Caco-2 (cell line): ENCODE measurements at regions of chr2 and their contacts with region 1.

Region 1: GRCh38 chr2:37877457-37878315 is 47.4 kb upstream of the RMDN2 start:
- DNase-seq: peak in 1 of 2 experiments; percentile 74
- H3K4me3 ChIP-seq: no peak overlapping the region
- H3K4me3 Mint-ChIP-seq: no peak overlapping the region
- H3K27ac Mint-ChIP-seq: no peak overlapping the region
- H3K4me1 ChIP-seq: no peaks in the 10 kb centered on the region; the same call in 1 of the 2 replicates
- H3K4me1 Mint-ChIP-seq: peaks cover 9% of the 10 kb centered on the region
- H3K27me3 ChIP-seq: no peaks in the 10 kb centered on the region
- H3K27me3 Mint-ChIP-seq: no peaks in the 10 kb centered on the region
- CTCF ChIP-seq: peak; percentile 68 to 80

Region 2: DNA sequence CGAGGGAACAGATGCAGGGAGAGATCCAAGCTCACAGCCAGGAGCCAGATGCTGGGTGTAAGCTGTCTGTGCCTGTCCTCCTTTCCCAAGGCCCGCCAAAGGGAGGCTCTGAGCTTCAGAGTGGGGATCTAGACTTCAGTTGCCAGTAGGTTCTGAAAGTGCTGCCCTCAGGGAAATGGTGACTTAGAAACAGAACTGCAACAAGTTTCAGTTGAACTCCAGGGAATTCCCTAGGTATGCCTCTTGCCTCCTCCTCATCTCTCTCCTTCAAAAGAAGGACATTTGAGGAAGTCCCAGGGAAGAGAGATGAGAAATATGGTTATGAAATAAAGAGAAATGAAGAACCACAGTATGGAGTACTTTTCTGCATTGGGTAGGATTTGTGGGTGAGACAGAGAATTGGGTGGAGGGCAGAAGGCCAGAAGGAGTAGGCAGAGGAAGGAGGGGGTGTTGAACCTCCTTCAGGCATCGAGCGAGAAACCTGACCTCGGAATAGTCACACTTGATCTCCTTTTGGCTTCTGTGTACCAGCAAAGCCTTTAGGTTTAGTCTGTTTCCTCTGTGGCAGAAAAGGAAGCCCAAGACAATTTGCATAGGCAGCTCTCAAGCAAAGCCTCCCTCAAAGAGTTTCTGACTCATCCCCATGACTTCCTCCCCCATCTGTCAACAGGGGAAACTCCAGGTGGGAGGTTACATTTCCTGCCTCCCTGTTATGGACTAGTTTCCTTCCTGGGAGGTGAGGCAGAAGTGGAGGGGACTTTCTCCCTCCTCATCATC is 487.5 kb before region 1 on chr2:
- CTCF ChIA-PET with region 1: interaction called, 62 read pairs
- POLR2A ChIA-PET with region 1: no interaction called
- intact Hi-C with region 1: no loop called
- DNase-seq: peak; percentile 40 to 46
- H3K4me3 ChIP-seq: no peak overlapping the region
- H3K4me3 Mint-ChIP-seq: no peak overlapping the region
- H3K27ac Mint-ChIP-seq: no peak overlapping the region
- H3K4me1 ChIP-seq: peaks cover 12% of the 10 kb centered on the region
- H3K4me1 Mint-ChIP-seq: peaks cover 26% of the 10 kb centered on the region
- H3K27me3 ChIP-seq: no peaks in the 10 kb centered on the region
- H3K27me3 Mint-ChIP-seq: no peaks in the 10 kb centered on the region
- CTCF ChIP-seq: no peak

Region 3: GRCh38 chr2:37400041-37400440 is 477.6 kb before region 1 on chr2:
- CTCF ChIA-PET with region 1: interaction called, 62 read pairs
- POLR2A ChIA-PET with region 1: no interaction called
- intact Hi-C with region 1: loop called (anchors 1 kb)
- DNase-seq: no peak
- H3K4me3 ChIP-seq: no peak overlapping the region
- H3K4me3 Mint-ChIP-seq: no peak overlapping the region
- H3K27ac Mint-ChIP-seq: no peak overlapping the region
- H3K4me1 ChIP-seq: no peaks in the 10 kb centered on the region
- H3K4me1 Mint-ChIP-seq: no peaks in the 10 kb centered on the region
- H3K27me3 ChIP-seq: no peaks in the 10 kb centered on the region
- H3K27me3 Mint-ChIP-seq: no peaks in the 10 kb centered on the region
- CTCF ChIP-seq: no peak

Region 4: GRCh38 chr2:37653805-37654378 is 223.8 kb before region 1 on chr2:
- CTCF ChIA-PET with region 1: interaction called, 8 read pairs
- POLR2A ChIA-PET with region 1: no interaction called
- intact Hi-C with region 1: loop called (anchors 5 kb)
- DNase-seq: no peak
- H3K4me3 ChIP-seq: no peak overlapping the region
- H3K4me3 Mint-ChIP-seq: no peak overlapping the region
- H3K27ac Mint-ChIP-seq: peak overlapping the region; percentile 68
- H3K4me1 ChIP-seq: peaks cover 67% of the 10 kb centered on the region
- H3K4me1 Mint-ChIP-seq: peaks cover 73% of the 10 kb centered on the region
- H3K27me3 ChIP-seq: no peaks in the 10 kb centered on the region
- H3K27me3 Mint-ChIP-seq: no peaks in the 10 kb centered on the region
- CTCF ChIP-seq: no peak

Region 5: GRCh38 chr2:37672104-37672869 is 205.4 kb before region 1 on chr2:
- CTCF ChIA-PET with region 1: interaction called, 11 read pairs
- POLR2A ChIA-PET with region 1: no interaction called
- intact Hi-C with region 1: loop called (anchors 1 kb)
- DNase-seq: peak; percentile 94 to 95
- H3K4me3 ChIP-seq: peak overlapping the region; percentile 98
- H3K4me3 Mint-ChIP-seq: peak overlapping the region; percentile 73
- H3K27ac Mint-ChIP-seq: peak overlapping the region; percentile 20
- H3K4me1 ChIP-seq: peaks cover 47% of the 10 kb centered on the region
- H3K4me1 Mint-ChIP-seq: peaks cover 40% of the 10 kb centered on the region
- H3K27me3 ChIP-seq: no peaks in the 10 kb centered on the region
- H3K27me3 Mint-ChIP-seq: no peaks in the 10 kb centered on the region
- CTCF ChIP-seq: no peak

Region 6: DNA sequence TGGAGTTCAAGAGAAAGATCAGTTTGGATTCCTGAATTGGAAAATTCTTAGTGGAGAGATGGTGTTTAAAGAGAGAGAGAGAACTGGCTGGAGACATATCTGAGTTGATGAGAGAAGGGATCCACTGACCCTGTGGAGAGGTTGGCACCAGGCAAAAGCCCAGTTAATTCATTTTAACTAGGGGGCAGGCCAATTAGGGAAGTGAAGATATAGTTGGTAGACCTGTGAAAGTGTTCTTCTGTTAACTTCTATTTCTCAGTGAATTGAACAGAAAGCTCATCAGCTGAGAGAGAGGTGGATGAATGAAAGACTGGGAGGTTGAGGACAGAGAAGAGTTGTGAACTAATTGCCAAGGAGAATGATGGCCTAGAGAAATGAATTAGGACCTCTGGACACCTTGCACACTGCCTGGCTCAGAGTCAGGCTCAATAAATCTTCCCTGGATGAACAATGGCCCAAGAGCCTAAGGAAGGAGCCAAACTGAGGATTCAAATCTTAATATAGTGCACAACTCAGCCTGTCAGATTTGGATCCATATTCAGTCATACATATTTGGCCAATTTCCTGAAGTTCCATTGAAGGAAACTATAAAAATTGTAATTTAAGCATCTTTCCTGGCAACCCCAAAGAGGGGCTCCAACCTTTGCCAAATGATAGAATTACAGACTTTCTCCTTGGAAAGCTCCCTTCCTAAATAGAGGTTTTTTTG is 34.8 kb before region 1 on chr2:
- CTCF ChIA-PET with region 1: interaction called, 10 read pairs
- POLR2A ChIA-PET with region 1: no interaction called
- intact Hi-C with region 1: no loop called
- DNase-seq: no peak
- H3K4me3 ChIP-seq: no peak overlapping the region
- H3K4me3 Mint-ChIP-seq: no peak overlapping the region
- H3K27ac Mint-ChIP-seq: no peak overlapping the region
- H3K4me1 ChIP-seq: no peaks in the 10 kb centered on the region
- H3K4me1 Mint-ChIP-seq: peaks cover 4% of the 10 kb centered on the region
- H3K27me3 ChIP-seq: no peaks in the 10 kb centered on the region
- H3K27me3 Mint-ChIP-seq: peaks cover 2% of the 10 kb centered on the region
- CTCF ChIP-seq: no peak

Region 7: DNA sequence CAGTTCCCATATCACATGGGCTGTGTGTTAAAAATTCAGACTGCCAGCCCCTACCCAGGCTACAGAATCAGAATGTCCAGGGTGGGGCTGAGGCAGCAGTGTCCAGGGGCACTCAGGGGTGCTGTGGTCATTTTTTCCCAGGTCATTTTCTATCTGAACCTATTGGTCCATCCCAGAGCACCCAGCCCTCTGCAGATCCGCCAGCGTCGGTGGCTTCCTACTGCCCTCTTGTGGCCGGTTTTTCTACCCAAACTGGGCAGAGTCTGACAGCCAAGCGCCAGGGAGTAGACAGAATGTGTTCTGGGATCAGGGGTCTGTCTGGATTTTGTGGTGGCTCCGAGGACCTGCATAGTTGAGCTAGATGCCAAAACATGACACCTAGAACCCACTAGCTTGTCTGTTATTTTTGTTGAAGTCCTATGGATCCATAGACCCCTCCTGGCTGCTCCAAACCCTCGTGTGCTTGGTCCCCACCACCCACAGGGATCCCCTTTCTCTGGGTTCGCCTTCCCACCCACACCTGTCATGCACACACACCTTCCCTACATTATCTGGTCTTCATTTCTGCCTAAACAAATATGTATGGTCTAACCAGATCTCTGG is 13.3 kb after region 1 on chr2:
- CTCF ChIA-PET with region 1: interaction called, 12 read pairs
- POLR2A ChIA-PET with region 1: no interaction called
- intact Hi-C with region 1: no loop called
- DNase-seq: peak; percentile 80 to 84
- H3K4me3 ChIP-seq: no peak overlapping the region
- H3K4me3 Mint-ChIP-seq: no peak overlapping the region
- H3K27ac Mint-ChIP-seq: no peak overlapping the region
- H3K4me1 ChIP-seq: no peaks in the 10 kb centered on the region
- H3K4me1 Mint-ChIP-seq: peaks cover 6% of the 10 kb centered on the region
- H3K27me3 ChIP-seq: no peaks in the 10 kb centered on the region
- H3K27me3 Mint-ChIP-seq: no peaks in the 10 kb centered on the region
- CTCF ChIP-seq: peak; percentile 80 to 81

Region 8: DNA sequence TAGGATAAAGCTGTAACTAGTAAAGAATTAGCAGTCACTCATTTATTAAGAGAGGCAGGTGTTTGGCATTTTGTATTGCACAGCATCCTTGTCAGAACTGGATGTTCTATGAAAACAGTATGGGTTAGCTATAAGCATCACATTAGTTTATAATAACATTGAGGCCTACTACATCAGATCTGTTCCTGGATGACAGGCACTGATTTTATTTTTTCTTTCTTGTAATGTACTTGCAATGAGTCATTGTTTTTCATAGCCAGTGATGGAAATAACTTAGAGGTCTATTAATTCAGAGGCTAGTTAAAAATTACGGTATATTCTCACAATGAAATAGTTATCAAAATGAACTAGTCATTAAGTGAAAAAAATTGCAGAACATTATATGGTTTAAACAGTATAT is 34.4 kb after region 1 on chr2:
- CTCF ChIA-PET with region 1: no interaction called
- POLR2A ChIA-PET with region 1: no interaction called
- intact Hi-C with region 1: no loop called
- DNase-seq: no peak
- H3K4me3 ChIP-seq: no peak overlapping the region
- H3K4me3 Mint-ChIP-seq: no peak overlapping the region
- H3K27ac Mint-ChIP-seq: no peak overlapping the region
- H3K4me1 ChIP-seq: no peaks in the 10 kb centered on the region
- H3K4me1 Mint-ChIP-seq: no peaks in the 10 kb centered on the region
- H3K27me3 ChIP-seq: no peaks in the 10 kb centered on the region
- H3K27me3 Mint-ChIP-seq: no peaks in the 10 kb centered on the region
- CTCF ChIP-seq: no peak